Activated CD8-positive, alpha-beta T cell treated with anti-CD3 and anti-CD28 coated beads for 36 hours (primary cell): ENCODE measurements at regions of chr1 and their contacts with region 1.

Region 1: GRCh38 chr1:167542109-167543032 is 11.2 kb downstream of the CREG1 start:
- DNase-seq: no peak
- ATAC-seq: peak; percentile 32
- H3K4me3 Mint-ChIP-seq: no peak overlapping the region
- H3K27ac Mint-ChIP-seq: peak overlapping the region; percentile 2
- H3K4me1 Mint-ChIP-seq: peaks cover 28% of the 10 kb centered on the region
- H3K27me3 Mint-ChIP-seq: no peaks in the 10 kb centered on the region
- CTCF ChIP-seq: no peak

Region 2: GRCh38 chr1:167342846-167343245 is 199.5 kb before region 1 on chr1:
- CTCF ChIA-PET with region 1: no interaction called
- POLR2A ChIA-PET with region 1: no interaction called
- intact Hi-C with region 1: no loop called
- DNase-seq: no peak
- ATAC-seq: no peak
- H3K4me3 Mint-ChIP-seq: no peak overlapping the region
- H3K27ac Mint-ChIP-seq: no peak overlapping the region
- H3K4me1 Mint-ChIP-seq: no peaks in the 10 kb centered on the region
- H3K27me3 Mint-ChIP-seq: no peaks in the 10 kb centered on the region
- CTCF ChIP-seq: peak; percentile 23

Region 3: DNA sequence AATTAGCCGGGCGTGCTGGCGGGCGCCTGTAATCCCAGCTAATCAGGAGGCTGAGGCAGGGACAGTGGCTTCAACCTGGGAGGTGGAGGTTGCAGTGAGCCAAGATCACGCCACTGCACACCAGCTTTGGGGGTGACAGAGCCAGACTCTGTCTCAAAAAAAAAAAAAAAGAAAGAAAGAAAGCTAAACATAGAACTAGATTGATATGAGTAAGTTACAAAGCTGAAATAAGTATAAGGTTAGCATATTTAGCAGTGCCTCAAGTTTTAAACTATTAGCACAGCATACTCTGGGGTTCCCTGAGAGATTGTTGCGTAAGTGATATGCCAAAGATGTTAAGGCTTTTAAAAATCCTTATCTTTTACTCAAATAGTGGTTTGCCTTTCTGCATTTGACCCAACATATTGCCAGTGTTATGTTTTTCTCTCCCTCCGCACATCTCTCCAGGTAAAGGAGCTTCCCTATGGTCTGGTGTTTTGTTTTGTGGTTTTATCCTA is 150.1 kb before region 1 on chr1:
- CTCF ChIA-PET with region 1: interaction called, 15 read pairs
- POLR2A ChIA-PET with region 1: no interaction called
- intact Hi-C with region 1: no loop called
- DNase-seq: no peak
- ATAC-seq: no peak
- H3K4me3 Mint-ChIP-seq: no peak overlapping the region
- H3K27ac Mint-ChIP-seq: no peak overlapping the region
- H3K4me1 Mint-ChIP-seq: no peaks in the 10 kb centered on the region
- H3K27me3 Mint-ChIP-seq: no peaks in the 10 kb centered on the region
- CTCF ChIP-seq: no peak

Region 4: DNA sequence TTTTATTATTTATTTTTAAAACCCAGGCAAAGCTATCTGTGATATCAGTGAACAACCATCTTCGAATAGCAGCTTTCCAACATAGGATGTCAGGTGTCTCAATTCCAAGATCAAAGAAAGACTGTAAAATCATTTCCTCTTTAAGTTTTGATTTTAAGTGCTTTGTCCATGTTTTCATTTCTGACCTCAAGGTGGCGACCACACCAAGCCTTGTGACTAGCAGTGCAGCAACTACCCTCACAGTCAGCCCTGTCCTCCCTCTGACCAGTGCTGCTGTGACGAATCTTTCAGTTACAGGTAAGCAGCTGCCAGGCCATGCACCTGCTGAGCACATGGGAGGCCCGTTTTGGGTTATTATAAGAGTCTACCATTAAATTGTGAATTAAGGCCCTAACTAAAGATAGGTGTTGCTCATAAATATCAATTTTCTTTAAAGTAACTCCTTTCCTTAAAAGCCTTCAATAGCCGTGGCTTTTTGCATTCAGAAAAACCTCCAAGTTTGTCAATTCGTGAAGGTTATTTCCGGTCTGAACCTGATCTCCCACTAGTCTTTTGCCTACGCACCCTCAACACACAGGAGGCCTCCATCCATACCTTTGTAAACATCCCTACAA is 141.0 kb before region 1 on chr1:
- CTCF ChIA-PET with region 1: interaction called, 34 read pairs
- POLR2A ChIA-PET with region 1: interaction called, 3 read pairs
- intact Hi-C with region 1: loop called (anchors 2 kb)
- DNase-seq: peak; percentile 69
- ATAC-seq: peak; percentile 77
- H3K4me3 Mint-ChIP-seq: no peak overlapping the region
- H3K27ac Mint-ChIP-seq: no peak overlapping the region
- H3K4me1 Mint-ChIP-seq: peaks cover 2% of the 10 kb centered on the region
- H3K27me3 Mint-ChIP-seq: no peaks in the 10 kb centered on the region
- CTCF ChIP-seq: peak; percentile 68

Region 5: GRCh38 chr1:167409183-167409582 is 133.2 kb before region 1 on chr1:
- CTCF ChIA-PET with region 1: interaction called, 34 read pairs
- POLR2A ChIA-PET with region 1: no interaction called
- intact Hi-C with region 1: no loop called
- DNase-seq: no peak
- ATAC-seq: no peak
- H3K4me3 Mint-ChIP-seq: no peak overlapping the region
- H3K27ac Mint-ChIP-seq: no peak overlapping the region
- H3K4me1 Mint-ChIP-seq: peaks cover 10% of the 10 kb centered on the region
- H3K27me3 Mint-ChIP-seq: no peaks in the 10 kb centered on the region
- CTCF ChIP-seq: peak; percentile 38

Region 6: GRCh38 chr1:167430134-167430856 is 112.1 kb before region 1 on chr1:
- CTCF ChIA-PET with region 1: interaction called, 14 read pairs
- POLR2A ChIA-PET with region 1: no interaction called
- intact Hi-C with region 1: no loop called
- DNase-seq: no peak
- ATAC-seq: peak; percentile 11
- H3K4me3 Mint-ChIP-seq: no peak overlapping the region
- H3K27ac Mint-ChIP-seq: peak overlapping the region; percentile 84
- H3K4me1 Mint-ChIP-seq: peaks cover 39% of the 10 kb centered on the region
- H3K27me3 Mint-ChIP-seq: no peaks in the 10 kb centered on the region
- CTCF ChIP-seq: no peak

Region 7: DNA sequence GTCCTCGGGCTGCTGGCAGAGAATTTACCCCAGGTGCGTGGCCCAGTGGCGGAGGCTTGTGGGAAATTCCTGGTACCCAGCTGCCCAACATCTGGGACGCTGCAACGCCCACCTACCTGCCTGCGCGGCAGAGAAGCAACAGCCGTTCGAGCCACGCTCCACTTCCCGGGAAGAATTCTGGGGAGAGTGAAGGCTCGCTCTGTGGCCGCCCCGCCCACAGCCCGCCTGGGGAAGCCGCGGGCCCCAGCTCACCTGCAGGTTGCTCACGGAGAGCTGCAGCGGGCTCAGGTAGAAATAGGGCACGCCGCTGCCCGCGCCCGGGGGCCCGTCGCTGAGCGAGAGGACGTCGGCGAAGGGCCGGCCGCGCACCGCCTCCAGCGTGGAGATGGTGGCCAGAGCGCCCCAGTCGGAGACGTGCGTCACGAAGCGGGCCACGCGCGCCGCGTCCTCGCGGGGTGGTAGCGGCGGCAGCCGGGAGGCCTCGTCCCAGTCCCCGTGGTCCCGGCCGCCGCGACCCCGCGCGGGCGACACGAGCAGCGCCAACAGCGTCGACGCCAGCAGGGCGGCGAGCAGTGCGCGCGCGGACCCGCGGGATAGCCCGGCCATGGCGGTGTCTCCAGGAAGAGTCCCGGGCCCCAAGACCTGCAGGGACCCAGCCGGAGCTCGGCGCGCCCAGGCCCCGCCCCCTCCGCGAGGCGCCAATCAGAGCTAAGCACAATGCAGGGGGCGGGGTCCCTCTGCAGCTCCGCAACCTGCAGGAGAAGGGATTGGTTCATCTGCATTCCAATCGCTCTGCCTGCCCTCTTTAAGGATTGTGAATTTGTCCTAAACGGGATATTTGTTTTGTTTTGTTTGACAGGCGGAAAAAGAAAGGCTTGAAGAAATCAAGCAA is 11.0 kb after region 1 on chr1 and contains the start of gene CREG1:
- CTCF ChIA-PET with region 1: interaction called, 71 read pairs
- POLR2A ChIA-PET with region 1: interaction called, 3 read pairs
- intact Hi-C with region 1: no loop called
- DNase-seq: peak; percentile 92
- ATAC-seq: peak; percentile 100
- H3K4me3 Mint-ChIP-seq: peak within 1 kb of the TSS; percentile 86
- H3K27ac Mint-ChIP-seq: peak within 1 kb of the TSS; percentile 23
- H3K4me1 Mint-ChIP-seq: peaks cover 32% of the 10 kb centered on the region
- H3K27me3 Mint-ChIP-seq: no peaks in the 10 kb centered on the region
- CTCF ChIP-seq: no peak
- total RNA-seq, gene CREG1: 9.7 to 10.0 TPM

Region 8: DNA sequence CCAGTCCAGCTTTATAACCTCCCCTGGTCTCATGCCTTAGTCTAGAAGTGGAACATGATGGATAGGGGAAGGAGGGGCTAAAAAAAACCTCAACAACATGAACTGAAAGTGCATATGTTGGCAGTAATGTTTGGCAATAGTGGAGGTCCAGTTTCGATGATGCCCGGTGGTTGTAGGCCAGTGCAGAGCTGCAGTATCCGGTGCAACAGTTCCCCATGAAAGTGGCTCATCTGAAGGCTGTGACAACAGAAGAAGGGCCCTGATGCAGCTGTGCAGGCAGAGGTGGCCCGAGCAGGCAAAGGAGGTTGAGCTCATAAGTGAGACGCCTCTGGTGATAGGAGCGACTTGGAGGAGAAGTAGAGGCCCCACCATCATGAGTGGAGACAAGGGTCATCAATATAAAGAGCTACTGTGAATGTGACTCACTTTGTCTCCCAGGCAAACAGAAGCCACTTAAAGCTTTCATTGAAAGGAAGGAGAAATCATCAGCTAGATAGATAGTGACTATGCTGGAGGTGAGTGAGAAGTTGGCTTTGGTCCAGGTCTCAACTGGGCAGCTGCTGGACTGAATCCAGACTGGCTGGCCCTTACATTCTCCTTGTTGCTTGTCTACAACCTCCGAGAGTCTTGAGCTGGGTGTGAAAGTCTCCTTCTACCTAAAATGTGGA is 21.3 kb after region 1 on chr1:
- CTCF ChIA-PET with region 1: interaction called, 31 read pairs
- POLR2A ChIA-PET with region 1: no interaction called
- intact Hi-C with region 1: no loop called
- DNase-seq: no peak
- ATAC-seq: no peak
- H3K4me3 Mint-ChIP-seq: no peak overlapping the region
- H3K27ac Mint-ChIP-seq: peak overlapping the region; percentile 32
- H3K4me1 Mint-ChIP-seq: peaks cover 3% of the 10 kb centered on the region
- H3K27me3 Mint-ChIP-seq: no peaks in the 10 kb centered on the region
- CTCF ChIP-seq: no peak

Region 9: GRCh38 chr1:167715157-167715999 is 173.0 kb after region 1 on chr1:
- CTCF ChIA-PET with region 1: no interaction called
- POLR2A ChIA-PET with region 1: no interaction called
- intact Hi-C with region 1: no loop called
- DNase-seq: peak; percentile 95
- ATAC-seq: peak; percentile 58
- H3K4me3 Mint-ChIP-seq: peak overlapping the region; percentile 90
- H3K27ac Mint-ChIP-seq: peak overlapping the region; percentile 95
- H3K4me1 Mint-ChIP-seq: peaks cover 28% of the 10 kb centered on the region
- H3K27me3 Mint-ChIP-seq: peaks cover 6% of the 10 kb centered on the region
- CTCF ChIP-seq: peak; percentile 87